Pancreas (tissue), 10 donors: ENCODE measurements at regions of chr22 and their contacts with region 1.

Region 1: GRCh38 chr22:22884010-22884887 is 3.4 kb upstream of the IGLL5 start:
- DNase-seq: peak in 3 of 6 donors; percentile 25 to 54 (median 35)
- ATAC-seq: peak in 3 of 4 donors; percentile 80 to 89 (median 87)
- H3K4me3 ChIP-seq: no peak overlapping the region
- H3K27ac ChIP-seq: no peak overlapping the region
- H3K4me1 ChIP-seq: no peaks in the 10 kb centered on the region
- H3K27me3 ChIP-seq: no peaks in the 10 kb centered on the region
- CTCF ChIP-seq: peak in 3 of 4 donors; percentile 34 to 48 (median 40)

Region 2: DNA sequence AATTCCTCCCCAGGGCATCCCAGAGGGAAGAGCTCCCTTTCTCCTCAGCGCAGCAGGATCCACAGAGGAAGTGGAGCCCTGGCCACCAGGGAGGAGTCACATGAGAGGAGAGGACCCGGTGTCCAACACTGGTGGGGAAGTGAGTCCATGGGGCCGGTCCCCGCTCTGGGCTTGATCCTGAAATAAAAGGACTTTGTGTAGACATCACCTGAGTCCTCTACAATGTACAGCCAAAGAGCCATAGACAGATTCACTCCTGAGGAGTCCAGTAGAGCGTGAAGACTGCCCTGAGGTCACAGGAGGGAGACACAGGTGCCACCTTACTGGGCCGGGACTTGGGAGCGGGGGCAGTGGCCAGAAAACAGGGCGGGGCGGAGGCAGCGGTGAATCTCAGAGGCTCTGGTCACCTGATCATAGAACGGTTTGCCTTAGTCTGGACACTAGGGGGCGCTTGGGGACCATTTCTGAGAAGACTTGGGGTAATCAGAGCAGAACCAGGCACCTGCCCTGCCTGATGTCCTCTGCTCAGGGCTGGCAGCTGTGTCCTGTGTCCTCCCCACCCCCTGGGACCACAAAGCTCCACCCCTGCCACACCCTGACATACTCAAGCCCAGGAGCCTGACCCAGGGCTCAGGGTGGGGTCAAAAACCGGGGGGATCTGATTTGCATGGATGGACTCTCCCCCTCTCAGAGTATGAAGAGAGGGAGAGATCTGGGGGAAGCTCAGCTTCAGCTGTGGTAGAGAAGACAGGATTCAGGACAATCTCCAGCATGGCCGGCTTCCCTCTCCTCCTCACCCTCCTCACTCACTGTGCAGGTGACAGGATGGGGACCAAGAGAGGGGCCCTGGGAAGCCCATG is 527.0 kb before region 1 on chr22:
- intact Hi-C with region 1: no loop called
- DNase-seq: peak; percentile 67 to 89 (median 78)
- ATAC-seq: peak; percentile 78 to 99 (median 96)
- H3K4me3 ChIP-seq: no peak overlapping the region
- H3K27ac ChIP-seq: no peak overlapping the region
- H3K4me1 ChIP-seq: no peaks in the 10 kb centered on the region
- H3K27me3 ChIP-seq: no peaks in the 10 kb centered on the region
- CTCF ChIP-seq: peak; percentile 37 to 55 (median 50)

Region 3: GRCh38 chr22:22593964-22594656 is 290.1 kb before region 1 on chr22:
- intact Hi-C with region 1: loop called in 1 of 3 experiments (anchors 10 kb)
- DNase-seq: peak in 5 of 6 donors; percentile 16 to 70 (median 44)
- ATAC-seq: peak in 3 of 4 donors; percentile 58 to 82 (median 71)
- H3K4me3 ChIP-seq: no peak overlapping the region
- H3K27ac ChIP-seq: no peak overlapping the region
- H3K4me1 ChIP-seq: no peaks in the 10 kb centered on the region
- H3K27me3 ChIP-seq: no peaks in the 10 kb centered on the region
- CTCF ChIP-seq: peak; percentile 44 to 59 (median 51)

Region 4: GRCh38 chr22:22687638-22688500 is 196.4 kb before region 1 on chr22:
- intact Hi-C with region 1: loop called in 1 of 3 experiments (anchors 10 kb)
- DNase-seq: peak in 3 of 6 donors; percentile 18 to 58 (median 32)
- ATAC-seq: peak; percentile 66 to 90 (median 84)
- H3K4me3 ChIP-seq: no peak overlapping the region
- H3K27ac ChIP-seq: no peak overlapping the region
- H3K4me1 ChIP-seq: peaks cover under 1 to 12% (median 5%) of the 10 kb centered on the region in 3 donors
- H3K27me3 ChIP-seq: no peaks in the 10 kb centered on the region
- CTCF ChIP-seq: peak; percentile 59 to 70 (median 68)

Region 5: GRCh38 chr22:23204541-23205157 is 320.4 kb after region 1 on chr22:
- intact Hi-C with region 1: no loop called
- DNase-seq: peak; percentile 58 to 91 (median 78)
- ATAC-seq: peak; percentile 71 to 83 (median 78)
- H3K4me3 ChIP-seq: no peak overlapping the region
- H3K27ac ChIP-seq: peak overlapping the region in 2 of 4 donors; percentile 19 to 47
- H3K4me1 ChIP-seq: peaks cover 18 to 39% (median 19%) of the 10 kb centered on the region in 3 donors
- H3K27me3 ChIP-seq: no peaks in the 10 kb centered on the region
- CTCF ChIP-seq: no peak